Stomach (tissue), 19 donors: ENCODE measurements at regions of chr12 and their contacts with region 1.

Region 1: DNA sequence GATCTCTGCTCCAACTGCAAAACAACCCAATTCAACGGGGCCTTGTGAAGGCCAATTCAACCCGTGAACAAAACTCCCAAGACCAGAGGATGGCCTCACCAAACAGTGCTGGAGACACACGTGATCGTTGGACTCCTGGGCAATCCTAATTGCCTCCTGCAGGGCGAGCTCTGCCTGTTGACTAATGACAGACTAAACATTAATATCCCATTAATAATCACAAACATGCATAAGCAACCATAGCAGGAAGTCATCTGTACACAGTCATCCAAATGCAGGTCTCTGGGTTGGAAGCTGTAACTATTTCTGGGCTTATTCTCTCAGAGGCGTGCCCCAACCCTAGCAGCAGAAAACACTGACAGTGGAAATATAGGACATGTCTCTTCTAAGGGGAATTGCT is 21.0 kb downstream of the ANAPC5 start:
- DNase-seq: peak in 1 of 2 donors; percentile 28
- H3K4me3 ChIP-seq: no peak overlapping the region
- H3K27ac ChIP-seq: no peak overlapping the region
- H3K4me1 ChIP-seq: peaks cover 0 to 19% (median 1%) of the 10 kb centered on the region in 4 donors
- H3K27me3 ChIP-seq: no peaks in the 10 kb centered on the region
- CTCF ChIP-seq: no peak
- EP300 ChIP-seq: no peak
- POLR2A ChIP-seq: no peak

Region 2: GRCh38 chr12:121446750-121447149 is 115.5 kb after region 1 on chr12:
- intact Hi-C with region 1: loop called (anchors 2 kb)
- DNase-seq: no peak
- H3K4me3 ChIP-seq: no peak overlapping the region
- H3K27ac ChIP-seq: no peak overlapping the region
- H3K4me1 ChIP-seq: peaks cover 0 to 31% (median 19%) of the 10 kb centered on the region in 4 donors
- H3K27me3 ChIP-seq: no peaks in the 10 kb centered on the region
- CTCF ChIP-seq: no peak
- EP300 ChIP-seq: no peak
- POLR2A ChIP-seq: no peak